HEK293 (cell line): ENCODE measurements at regions of chr16 and their contacts with region 1.

Region 1: GRCh38 chr16:53007095-53007494 is 45.6 kb downstream of the CHD9NB start:
- H3K4me3 ChIP-seq: no peak overlapping the region
- H3K27ac ChIP-seq: no peak overlapping the region
- H3K4me1 ChIP-seq: no peaks in the 10 kb centered on the region
- CTCF ChIP-seq: no peak

Region 2: GRCh38 chr16:52906281-52906680 is 100.8 kb before region 1 on chr16:
- CTCF ChIA-PET with region 1: no interaction called
- POLR2A ChIA-PET with region 1: no interaction called
- H3K4me3 ChIP-seq: no peak overlapping the region
- H3K27ac ChIP-seq: no peak overlapping the region
- H3K4me1 ChIP-seq: no peaks in the 10 kb centered on the region
- CTCF ChIP-seq: no peak

Region 3: GRCh38 chr16:53022374-53022773 is 15.3 kb after region 1 on chr16:
- CTCF ChIA-PET with region 1: interaction called, 26 read pairs
- POLR2A ChIA-PET with region 1: no interaction called
- H3K4me3 ChIP-seq: no peak overlapping the region
- H3K27ac ChIP-seq: no peak overlapping the region
- H3K4me1 ChIP-seq: no peaks in the 10 kb centered on the region
- CTCF ChIP-seq: peak; percentile 59